ENCODE measurements at regions of chr4 and their contacts with region 1.

Region 1: GRCh38 chr4:142353149-142353738 is 492.9 kb downstream of the INPP4B start:
- DNase-seq: no peak
- ATAC-seq: peak; percentile 41
- H3K4me3 ChIP-seq: no peak overlapping the region
- H3K27ac ChIP-seq: no peak overlapping the region
- H3K4me1 ChIP-seq: no peaks in the 10 kb centered on the region
- H3K27me3 ChIP-seq: no peaks in the 10 kb centered on the region
- CTCF ChIP-seq: peak; percentile 68 to 76 (median 72)
- EP300 ChIP-seq: no peak
- POLR2A ChIP-seq: no peak
- RAD21 ChIP-seq: peak; percentile 73

Region 2: GRCh38 chr4:140790765-140791164 is 1562.5 kb before region 1 on chr4:
- CTCF ChIA-PET with region 1: no interaction called
- POLR2A ChIA-PET with region 1: no interaction called
- RAD21 ChIA-PET with region 1: no interaction called
- SMC1A ChIA-PET with region 1: no interaction called
- in situ Hi-C with region 1: no loop called
- intact Hi-C with region 1: no loop called
- DNase-seq: peak; percentile 86
- ATAC-seq: peak; percentile 94
- H3K4me3 ChIP-seq: no peak overlapping the region
- H3K27ac ChIP-seq: peak overlapping the region; percentile 62
- H3K4me1 ChIP-seq: peaks cover 29% of the 10 kb centered on the region
- H3K27me3 ChIP-seq: no peaks in the 10 kb centered on the region
- CTCF ChIP-seq: no peak
- EP300 ChIP-seq: peak; percentile 30 to 85; a peak in 2 of 4 replicates
- POLR2A ChIP-seq: no peak
- RAD21 ChIP-seq: no peak

Region 3: DNA sequence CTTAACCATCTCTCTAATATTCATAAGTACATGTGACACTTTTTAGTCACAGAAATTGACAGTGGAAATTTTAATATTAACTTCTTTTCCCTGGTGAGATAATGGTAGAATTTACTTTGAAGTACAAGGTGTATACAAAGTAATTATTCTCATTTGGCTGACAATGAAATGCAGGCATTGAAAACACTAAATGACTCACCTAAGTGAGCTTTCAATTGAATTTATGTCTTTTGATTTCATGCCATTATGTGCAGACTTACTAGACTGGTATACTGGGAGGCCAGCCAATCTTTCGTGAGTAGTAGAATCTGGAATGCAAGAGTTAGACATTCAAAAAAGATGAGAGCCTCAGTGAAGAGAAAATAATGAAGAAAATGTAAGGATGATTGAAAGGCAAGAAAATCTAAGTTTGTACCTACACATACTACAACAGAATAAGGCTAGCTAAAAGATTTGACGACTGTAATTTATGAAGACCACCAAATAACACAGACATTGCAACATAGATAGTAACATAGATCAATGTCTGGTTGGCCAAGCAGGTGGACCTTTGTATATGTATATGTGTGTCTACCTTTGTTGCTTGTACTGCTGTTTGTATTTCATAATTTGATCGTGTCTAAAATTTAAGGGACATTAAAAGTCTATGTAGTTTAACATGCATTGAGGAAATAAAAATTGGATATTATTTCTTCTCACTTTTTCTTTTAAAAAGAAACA is 257.2 kb before region 1 on chr4:
- CTCF ChIA-PET with region 1: no interaction called
- POLR2A ChIA-PET with region 1: no interaction called
- RAD21 ChIA-PET with region 1: no interaction called
- SMC1A ChIA-PET with region 1: no interaction called
- in situ Hi-C with region 1: no loop called
- intact Hi-C with region 1: no loop called
- DNase-seq: no peak
- ATAC-seq: no peak
- H3K4me3 ChIP-seq: no peak overlapping the region
- H3K27ac ChIP-seq: no peak overlapping the region
- H3K4me1 ChIP-seq: no peaks in the 10 kb centered on the region
- H3K27me3 ChIP-seq: no peaks in the 10 kb centered on the region
- CTCF ChIP-seq: no peak
- EP300 ChIP-seq: no peak
- POLR2A ChIP-seq: no peak
- RAD21 ChIP-seq: no peak

Region 4: GRCh38 chr4:142211424-142211823 is 141.8 kb before region 1 on chr4:
- CTCF ChIA-PET with region 1: no interaction called
- POLR2A ChIA-PET with region 1: no interaction called
- RAD21 ChIA-PET with region 1: no interaction called
- SMC1A ChIA-PET with region 1: no interaction called
- in situ Hi-C with region 1: no loop called
- intact Hi-C with region 1: no loop called
- DNase-seq: no peak
- ATAC-seq: no peak
- H3K4me3 ChIP-seq: no peak overlapping the region
- H3K27ac ChIP-seq: no peak overlapping the region
- H3K4me1 ChIP-seq: no peaks in the 10 kb centered on the region
- H3K27me3 ChIP-seq: no peaks in the 10 kb centered on the region
- CTCF ChIP-seq: no peak
- EP300 ChIP-seq: no peak
- POLR2A ChIP-seq: no peak
- RAD21 ChIP-seq: no peak

Region 5: GRCh38 chr4:142282870-142283431 is 70.3 kb before region 1 on chr4:
- CTCF ChIA-PET with region 1: interaction called, 60 read pairs
- POLR2A ChIA-PET with region 1: interaction called, 3 read pairs
- RAD21 ChIA-PET with region 1: interaction called, 18 read pairs
- SMC1A ChIA-PET with region 1: interaction called, 26 read pairs
- in situ Hi-C with region 1: no loop called
- intact Hi-C with region 1: no loop called
- DNase-seq: no peak
- ATAC-seq: peak; percentile 47
- H3K4me3 ChIP-seq: no peak overlapping the region
- H3K27ac ChIP-seq: no peak overlapping the region
- H3K4me1 ChIP-seq: no peaks in the 10 kb centered on the region
- H3K27me3 ChIP-seq: no peaks in the 10 kb centered on the region
- CTCF ChIP-seq: peak; percentile 48 to 53 (median 49); a peak in 5 of 6 replicates
- EP300 ChIP-seq: no peak
- POLR2A ChIP-seq: no peak
- RAD21 ChIP-seq: peak; percentile 35

Region 6: GRCh38 chr4:142372530-142373260 is 19.5 kb after region 1 on chr4:
- CTCF ChIA-PET with region 1: interaction called, 68 read pairs
- POLR2A ChIA-PET with region 1: interaction called, 5 read pairs
- RAD21 ChIA-PET with region 1: interaction called, 18 read pairs
- SMC1A ChIA-PET with region 1: interaction called, 76 read pairs
- in situ Hi-C with region 1: no loop called
- intact Hi-C with region 1: no loop called
- DNase-seq: no peak
- ATAC-seq: peak; percentile 6
- H3K4me3 ChIP-seq: no peak overlapping the region
- H3K27ac ChIP-seq: no peak overlapping the region
- H3K4me1 ChIP-seq: no peaks in the 10 kb centered on the region
- H3K27me3 ChIP-seq: no peaks in the 10 kb centered on the region
- CTCF ChIP-seq: no peak
- EP300 ChIP-seq: no peak
- POLR2A ChIP-seq: no peak
- RAD21 ChIP-seq: no peak

Region 7: GRCh38 chr4:142474335-142475087 is 121.3 kb after region 1 on chr4:
- CTCF ChIA-PET with region 1: interaction called, 6 read pairs
- POLR2A ChIA-PET with region 1: no interaction called
- RAD21 ChIA-PET with region 1: interaction called, 9 read pairs
- SMC1A ChIA-PET with region 1: interaction called, 11 read pairs
- in situ Hi-C with region 1: no loop called
- intact Hi-C with region 1: no loop called
- DNase-seq: no peak
- ATAC-seq: peak; percentile 64
- H3K4me3 ChIP-seq: no peak overlapping the region
- H3K27ac ChIP-seq: no peak overlapping the region
- H3K4me1 ChIP-seq: no peaks in the 10 kb centered on the region
- H3K27me3 ChIP-seq: no peaks in the 10 kb centered on the region
- CTCF ChIP-seq: no peak
- EP300 ChIP-seq: no peak
- POLR2A ChIP-seq: no peak
- RAD21 ChIP-seq: no peak

Region 8: DNA sequence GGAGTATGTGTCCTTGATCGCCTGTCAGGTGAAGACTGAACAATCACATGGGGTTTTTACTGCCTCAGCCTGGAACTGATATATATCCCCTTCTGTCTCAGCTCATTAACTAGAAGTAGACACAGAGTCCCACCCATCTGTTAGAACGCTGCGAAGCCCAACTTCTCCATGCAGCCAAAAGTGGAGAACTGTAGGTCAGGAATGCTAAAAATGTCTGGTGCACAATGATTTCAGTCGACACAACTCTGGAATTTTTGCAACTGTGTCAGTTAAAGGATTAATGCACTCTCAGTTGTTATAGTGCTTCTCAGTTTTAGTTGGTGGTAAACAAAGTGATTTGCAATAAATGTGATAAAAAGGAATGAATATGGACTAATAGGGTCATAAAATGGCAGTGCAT is 205.6 kb after region 1 on chr4:
- CTCF ChIA-PET with region 1: interaction called, 13 read pairs
- POLR2A ChIA-PET with region 1: interaction called, 6 read pairs
- RAD21 ChIA-PET with region 1: interaction called, 6 read pairs
- SMC1A ChIA-PET with region 1: interaction called, 13 read pairs
- in situ Hi-C with region 1: no loop called
- intact Hi-C with region 1: no loop called
- DNase-seq: no peak
- ATAC-seq: no peak
- H3K4me3 ChIP-seq: no peak overlapping the region
- H3K27ac ChIP-seq: no peak overlapping the region
- H3K4me1 ChIP-seq: no peaks in the 10 kb centered on the region
- H3K27me3 ChIP-seq: no peaks in the 10 kb centered on the region
- CTCF ChIP-seq: no peak
- EP300 ChIP-seq: no peak
- POLR2A ChIP-seq: no peak
- RAD21 ChIP-seq: no peak

Region 9: GRCh38 chr4:142725886-142726285 is 372.6 kb after region 1 on chr4:
- CTCF ChIA-PET with region 1: interaction called, 10 read pairs
- POLR2A ChIA-PET with region 1: no interaction called
- RAD21 ChIA-PET with region 1: interaction called, 111 read pairs
- SMC1A ChIA-PET with region 1: interaction called, 45 read pairs
- in situ Hi-C with region 1: no loop called
- intact Hi-C with region 1: no loop called
- DNase-seq: no peak
- ATAC-seq: no peak
- H3K4me3 ChIP-seq: no peak overlapping the region
- H3K27ac ChIP-seq: no peak overlapping the region
- H3K4me1 ChIP-seq: no peaks in the 10 kb centered on the region
- H3K27me3 ChIP-seq: no peaks in the 10 kb centered on the region
- CTCF ChIP-seq: no peak
- EP300 ChIP-seq: no peak
- POLR2A ChIP-seq: no peak
- RAD21 ChIP-seq: no peak

Measured in GM12878 (cell line).